ENCODE measurements at regions of chr1 and their contacts with region 1.

Region 1: DNA sequence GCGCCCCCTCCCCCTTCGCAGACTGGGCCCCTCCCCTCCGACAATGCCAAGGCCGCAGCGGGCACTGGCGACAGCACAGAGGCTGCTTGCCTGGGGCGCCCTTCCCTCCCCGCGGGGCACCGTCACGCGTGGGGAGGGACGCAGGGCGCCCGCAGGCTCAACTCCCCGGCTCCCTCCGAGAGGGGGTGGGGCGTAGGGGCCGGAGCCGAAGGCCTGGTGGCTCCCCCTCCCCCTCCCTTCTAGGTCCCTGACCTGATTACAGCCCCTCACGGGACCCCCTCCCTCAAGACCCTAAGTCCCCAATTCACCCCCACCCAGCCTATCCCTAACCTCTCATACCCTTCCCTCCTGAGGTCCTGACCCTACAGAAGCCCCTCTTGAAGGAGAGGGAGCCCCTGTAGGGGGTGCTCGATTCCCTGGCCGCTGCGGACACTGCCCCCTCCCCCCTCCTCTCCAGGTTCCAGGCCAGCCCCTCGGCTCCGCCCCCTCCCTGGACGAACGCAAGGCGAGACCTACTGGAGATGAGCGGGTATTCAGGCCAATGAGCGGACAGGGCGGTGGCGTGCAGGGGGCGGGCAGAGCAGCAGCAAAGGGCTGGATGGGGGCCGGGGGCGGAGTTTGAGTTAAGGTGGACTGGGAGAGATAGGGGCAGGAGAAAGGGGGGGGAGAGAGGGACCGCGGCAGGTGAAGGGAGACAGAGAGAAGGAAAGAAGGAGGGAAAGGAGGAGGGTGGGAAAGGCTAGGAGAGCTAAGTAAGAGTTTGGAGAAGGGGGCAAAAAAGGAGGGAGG is 733 bp upstream of the ZBTB7B start:
- DNase-seq: peak; percentile 100

Region 2: DNA sequence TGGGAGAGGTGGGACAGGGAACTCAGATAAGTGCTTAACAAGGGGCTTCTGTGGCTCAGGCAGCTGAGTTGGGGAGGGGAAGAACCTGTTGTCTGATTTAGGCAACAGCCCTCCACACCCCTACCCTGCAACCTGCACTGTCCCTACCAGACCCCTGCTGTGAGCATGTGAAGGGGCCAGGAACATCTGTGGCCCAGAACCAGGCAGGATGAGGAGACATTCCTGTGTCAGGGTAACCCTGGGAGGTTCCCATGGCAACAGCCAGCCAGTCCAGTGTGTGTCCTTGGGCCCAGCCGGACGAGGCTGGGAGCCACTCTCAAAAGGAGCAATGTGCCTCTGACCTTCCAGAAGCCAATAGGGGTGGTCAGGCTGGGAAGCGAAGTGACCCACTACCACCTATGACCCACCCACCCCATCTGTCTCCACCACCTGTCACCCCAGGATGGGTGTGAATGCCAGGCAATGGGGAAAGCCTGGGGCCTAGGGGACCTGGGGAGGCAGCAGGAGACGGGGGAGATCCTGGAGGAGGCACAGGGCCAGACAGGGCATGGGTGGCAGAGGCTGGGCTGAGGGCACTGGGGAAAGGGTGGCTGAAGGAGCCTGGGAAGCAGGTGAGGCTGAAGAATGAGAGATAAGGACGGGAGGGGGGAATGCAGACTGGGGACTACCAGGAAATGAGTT is 60.4 kb before region 1 on chr1:
- intact Hi-C with region 1: no loop called
- DNase-seq: no peak

Region 3: GRCh38 chr1:154953611-154954038 is 48.2 kb before region 1 on chr1:
- intact Hi-C with region 1: loop called in 1 of 2 experiments (anchors 1 kb)
- DNase-seq: no peak

Region 4: DNA sequence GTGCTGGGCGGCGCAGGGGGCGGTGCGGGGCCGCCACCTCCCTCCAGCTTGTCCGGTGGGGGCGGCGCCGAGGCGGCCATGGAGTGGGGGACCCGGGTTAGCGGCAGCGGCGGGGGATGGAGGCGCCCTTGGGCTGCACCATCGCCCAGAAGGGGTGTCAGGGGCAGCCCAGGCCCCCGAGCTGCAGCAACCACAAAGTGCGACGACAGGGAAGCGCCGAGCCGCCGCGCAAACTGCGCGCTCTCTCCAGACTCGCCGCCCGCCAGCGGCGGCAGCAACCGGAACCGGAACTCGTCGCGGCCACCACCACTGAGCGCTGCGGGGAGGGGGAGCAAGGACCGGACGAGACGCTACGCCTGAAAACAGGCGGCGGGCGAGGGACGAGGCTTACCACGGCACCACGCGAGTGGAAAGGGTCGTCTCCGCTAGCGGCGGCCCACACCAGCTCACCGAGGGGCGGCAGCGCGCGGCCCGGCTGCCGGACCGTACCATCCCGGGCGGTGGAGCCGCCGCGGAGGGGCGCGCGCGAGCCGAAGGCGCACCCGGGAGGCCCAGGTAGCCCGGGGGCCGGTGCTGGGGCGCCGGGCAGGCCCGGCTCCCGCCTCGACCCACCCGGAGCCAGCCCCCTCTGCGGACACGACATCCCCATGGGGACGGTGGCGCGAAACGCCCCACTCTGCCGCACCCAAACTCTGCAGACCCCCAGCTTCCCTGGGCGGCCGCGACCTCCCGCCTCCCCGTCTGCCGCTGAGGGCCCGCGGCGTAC is 40.2 kb before region 1 on chr1 and contains the start of gene PYGO2:
- intact Hi-C with region 1: loop called in 1 of 2 experiments (anchors 5 kb)
- DNase-seq: peak; percentile 95
- total RNA-seq, gene PYGO2: 17.0 to 19.2 TPM

Region 5: GRCh38 chr1:155050560-155051341 is 48.9 kb after region 1 on chr1 and contains the start of gene ADAM15:
- intact Hi-C with region 1: loop called in 1 of 2 experiments (anchors 2 kb)
- DNase-seq: peak; percentile 96
- total RNA-seq, gene ADAM15: 146 to 178 TPM

Region 6: GRCh38 chr1:155127105-155127964 is 125.5 kb after region 1 on chr1 and contains the start of gene EFNA1:
- intact Hi-C with region 1: no loop called
- DNase-seq: peak; percentile 87
- total RNA-seq, gene EFNA1: 12.6 to 13.2 TPM